Calu3 (cell line): ENCODE measurements at regions of chr1 and their contacts with region 1.

Region 1: DNA sequence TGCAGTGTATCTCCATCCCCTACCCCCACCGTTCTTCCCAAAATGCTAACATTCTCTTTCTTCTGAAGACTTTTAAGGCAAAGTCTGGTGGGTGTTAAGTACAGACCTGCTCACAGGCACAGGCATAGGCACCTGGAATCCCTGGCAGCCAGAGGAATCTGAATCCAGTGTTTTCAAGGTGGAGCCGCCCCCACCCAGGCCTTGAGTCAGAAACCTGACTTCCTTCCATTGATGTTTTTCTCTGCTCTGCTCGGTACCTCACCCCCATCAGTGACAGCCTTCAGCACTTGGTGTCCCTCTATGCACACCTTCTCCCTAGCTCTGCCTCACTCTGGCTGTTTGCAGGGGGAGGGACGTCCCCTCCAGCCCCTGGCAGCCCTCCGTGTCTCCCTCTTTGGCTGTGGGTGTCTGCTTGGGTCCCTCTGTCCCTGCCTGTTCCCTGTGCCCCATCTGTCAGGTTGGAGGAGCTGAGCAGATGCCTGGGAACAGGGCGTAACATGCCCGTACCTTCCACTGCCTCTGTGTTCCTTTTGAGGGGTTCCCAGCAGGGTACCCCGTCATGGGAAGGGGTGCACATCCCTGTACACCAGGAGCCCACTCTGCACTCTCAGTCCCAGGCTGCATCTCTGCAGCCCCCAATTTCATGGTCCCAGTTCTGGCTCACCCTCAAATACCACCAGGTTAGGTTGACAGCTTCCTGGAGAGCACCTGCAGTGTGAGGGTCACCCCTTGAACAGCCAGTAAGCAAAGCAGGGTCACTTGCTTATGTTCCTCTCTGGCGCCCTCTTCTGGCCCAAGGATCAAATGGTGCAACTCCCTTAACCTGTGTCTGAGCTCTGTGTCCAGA is 6.7 kb downstream of the NCDN start:
- DNase-seq: peak; percentile 82
- H3K4me3 Mint-ChIP-seq: no peak overlapping the region
- H3K27ac Mint-ChIP-seq: no peak overlapping the region
- H3K4me1 Mint-ChIP-seq: peaks cover 1% of the 10 kb centered on the region
- H3K27me3 Mint-ChIP-seq: no peaks in the 10 kb centered on the region
- CTCF ChIP-seq: peak; percentile 71

Region 2: GRCh38 chr1:34806396-34806795 is 757.9 kb before region 1 on chr1:
- CTCF ChIA-PET with region 1: no interaction called
- intact Hi-C with region 1: no loop called
- DNase-seq: no peak
- H3K4me3 Mint-ChIP-seq: no peak overlapping the region
- H3K27ac Mint-ChIP-seq: no peak overlapping the region
- H3K4me1 Mint-ChIP-seq: peaks cover 19% of the 10 kb centered on the region
- H3K27me3 Mint-ChIP-seq: no peaks in the 10 kb centered on the region
- CTCF ChIP-seq: no peak

Region 3: GRCh38 chr1:35544978-35545377 is 19.3 kb before region 1 on chr1:
- CTCF ChIA-PET with region 1: no interaction called
- intact Hi-C with region 1: no loop called
- DNase-seq: peak; percentile 38
- H3K4me3 Mint-ChIP-seq: no peak overlapping the region
- H3K27ac Mint-ChIP-seq: no peak overlapping the region
- H3K4me1 Mint-ChIP-seq: no peaks in the 10 kb centered on the region
- H3K27me3 Mint-ChIP-seq: no peaks in the 10 kb centered on the region
- CTCF ChIP-seq: no peak

Region 4: GRCh38 chr1:35715568-35716002 is 151.3 kb after region 1 on chr1:
- CTCF ChIA-PET with region 1: interaction called, 32 read pairs
- intact Hi-C with region 1: no loop called
- DNase-seq: peak; percentile 79
- H3K4me3 Mint-ChIP-seq: no peak overlapping the region
- H3K27ac Mint-ChIP-seq: no peak overlapping the region
- H3K4me1 Mint-ChIP-seq: peaks cover 24% of the 10 kb centered on the region
- H3K27me3 Mint-ChIP-seq: no peaks in the 10 kb centered on the region
- CTCF ChIP-seq: peak; percentile 65

Region 5: DNA sequence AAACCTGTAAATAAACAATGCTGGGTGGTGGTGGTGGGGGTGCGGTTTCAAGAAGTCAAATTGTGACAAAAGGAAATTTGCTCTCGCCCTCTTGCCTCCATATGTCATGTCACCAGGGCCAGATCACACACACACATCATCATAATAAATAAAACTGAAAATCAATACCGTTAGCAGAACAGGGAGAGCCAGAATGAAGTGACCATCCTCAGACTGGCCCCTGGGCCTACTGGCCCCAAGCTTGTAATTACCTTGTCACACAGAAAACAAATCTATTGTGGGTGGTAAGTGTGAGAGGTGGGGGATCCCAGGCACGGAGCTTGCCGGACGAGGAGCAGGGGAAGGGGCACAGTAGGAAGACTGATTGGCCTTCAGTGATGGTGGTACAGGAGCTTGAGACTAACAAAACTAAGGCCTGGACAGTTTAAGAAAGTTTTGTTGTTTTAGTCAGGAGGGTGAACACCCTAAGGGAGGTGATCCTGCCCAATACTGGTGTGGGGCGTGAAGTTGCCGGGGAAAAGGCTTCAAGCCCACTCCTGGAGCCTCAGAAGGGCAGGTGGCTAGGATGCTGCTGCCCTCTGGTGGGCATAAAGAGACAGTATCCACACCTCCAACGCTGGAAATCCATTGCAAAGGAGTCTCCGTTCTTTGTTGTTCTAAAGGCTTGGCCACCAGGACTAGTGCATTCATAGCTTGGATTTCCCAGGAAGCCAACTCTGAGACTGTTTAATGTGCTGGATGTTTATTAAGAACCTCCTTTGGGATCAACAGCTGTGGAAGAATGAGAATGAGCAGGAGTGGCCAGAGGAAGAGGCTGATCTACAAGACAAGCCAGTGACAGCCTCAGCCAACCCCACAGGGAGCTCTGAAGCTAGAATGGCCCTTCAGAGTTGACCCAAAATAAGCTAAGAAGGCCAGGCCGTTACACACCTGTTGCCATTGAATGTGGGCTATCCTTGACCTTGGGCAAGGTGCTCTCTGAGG is 162.5 kb after region 1 on chr1:
- CTCF ChIA-PET with region 1: interaction called, 5 read pairs
- intact Hi-C with region 1: loop called (anchors 1 kb)
- DNase-seq: peak; percentile 49
- H3K4me3 Mint-ChIP-seq: no peak overlapping the region
- H3K27ac Mint-ChIP-seq: no peak overlapping the region
- H3K4me1 Mint-ChIP-seq: no peaks in the 10 kb centered on the region
- H3K27me3 Mint-ChIP-seq: no peaks in the 10 kb centered on the region
- CTCF ChIP-seq: peak; percentile 82

Region 6: GRCh38 chr1:35769759-35770446 is 205.6 kb after region 1 on chr1 and contains the start of gene CLSPN:
- CTCF ChIA-PET with region 1: no interaction called
- intact Hi-C with region 1: loop called (anchors 1 kb)
- DNase-seq: peak; percentile 97
- H3K4me3 Mint-ChIP-seq: peak within 1 kb of the TSS; percentile 80
- H3K27ac Mint-ChIP-seq: peak within 1 kb of the TSS; percentile 68
- H3K4me1 Mint-ChIP-seq: no peaks in the 10 kb centered on the region
- H3K27me3 Mint-ChIP-seq: no peaks in the 10 kb centered on the region
- CTCF ChIP-seq: no peak
- total RNA-seq, gene CLSPN: 30.3 and 30.4 TPM in 2 replicates